ENCODE measurements at regions of chr12 and their contacts with region 1.

Region 1: GRCh38 chr12:6927379-6928024 is at the start of gene ATN1:
- DNase-seq: no peak
- H3K4me3 ChIP-seq: peak within 1 kb of the TSS; percentile 83
- CTCF ChIP-seq: no peak

Region 2: DNA sequence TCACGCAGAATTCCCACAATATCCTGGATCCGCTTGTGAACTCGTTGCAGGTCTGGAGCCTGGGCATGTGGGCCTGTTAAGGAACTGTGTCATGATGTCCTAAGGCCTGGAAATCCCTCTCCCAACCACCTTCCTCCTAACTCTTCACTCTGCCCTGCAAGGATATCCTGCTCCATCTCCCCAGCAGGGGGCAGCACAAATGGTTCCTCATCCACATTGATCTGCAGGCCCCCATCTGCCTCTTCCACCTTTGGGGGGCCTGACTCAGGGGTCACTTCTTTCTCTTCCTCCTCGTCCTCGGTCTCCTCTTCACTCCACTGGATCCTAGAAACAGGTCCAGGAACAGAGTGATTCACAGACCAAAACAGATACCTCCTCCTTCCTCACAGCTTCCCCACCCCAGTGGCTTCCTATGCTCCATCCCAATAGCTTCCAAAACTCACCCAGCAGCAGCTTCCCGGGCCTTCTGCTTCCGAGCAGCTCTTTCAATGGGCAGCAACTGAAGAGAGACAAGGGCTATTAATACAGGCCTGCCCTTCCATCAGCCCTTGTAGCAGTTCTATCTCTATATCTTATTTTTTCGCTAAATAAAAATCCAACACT is 364.0 kb before region 1 on chr12:
- CTCF ChIA-PET with region 1: no interaction called
- POLR2A ChIA-PET with region 1: no interaction called
- DNase-seq: no peak
- H3K4me3 ChIP-seq: no peak overlapping the region
- CTCF ChIP-seq: peak; percentile 84

Region 3: GRCh38 chr12:6890789-6891645 is 36.5 kb before region 1 on chr12:
- CTCF ChIA-PET with region 1: interaction called, 19 read pairs
- POLR2A ChIA-PET with region 1: interaction called, 3 read pairs
- DNase-seq: peak; percentile 47
- H3K4me3 ChIP-seq: peak overlapping the region; percentile 57
- CTCF ChIP-seq: peak; percentile 78

Region 4: DNA sequence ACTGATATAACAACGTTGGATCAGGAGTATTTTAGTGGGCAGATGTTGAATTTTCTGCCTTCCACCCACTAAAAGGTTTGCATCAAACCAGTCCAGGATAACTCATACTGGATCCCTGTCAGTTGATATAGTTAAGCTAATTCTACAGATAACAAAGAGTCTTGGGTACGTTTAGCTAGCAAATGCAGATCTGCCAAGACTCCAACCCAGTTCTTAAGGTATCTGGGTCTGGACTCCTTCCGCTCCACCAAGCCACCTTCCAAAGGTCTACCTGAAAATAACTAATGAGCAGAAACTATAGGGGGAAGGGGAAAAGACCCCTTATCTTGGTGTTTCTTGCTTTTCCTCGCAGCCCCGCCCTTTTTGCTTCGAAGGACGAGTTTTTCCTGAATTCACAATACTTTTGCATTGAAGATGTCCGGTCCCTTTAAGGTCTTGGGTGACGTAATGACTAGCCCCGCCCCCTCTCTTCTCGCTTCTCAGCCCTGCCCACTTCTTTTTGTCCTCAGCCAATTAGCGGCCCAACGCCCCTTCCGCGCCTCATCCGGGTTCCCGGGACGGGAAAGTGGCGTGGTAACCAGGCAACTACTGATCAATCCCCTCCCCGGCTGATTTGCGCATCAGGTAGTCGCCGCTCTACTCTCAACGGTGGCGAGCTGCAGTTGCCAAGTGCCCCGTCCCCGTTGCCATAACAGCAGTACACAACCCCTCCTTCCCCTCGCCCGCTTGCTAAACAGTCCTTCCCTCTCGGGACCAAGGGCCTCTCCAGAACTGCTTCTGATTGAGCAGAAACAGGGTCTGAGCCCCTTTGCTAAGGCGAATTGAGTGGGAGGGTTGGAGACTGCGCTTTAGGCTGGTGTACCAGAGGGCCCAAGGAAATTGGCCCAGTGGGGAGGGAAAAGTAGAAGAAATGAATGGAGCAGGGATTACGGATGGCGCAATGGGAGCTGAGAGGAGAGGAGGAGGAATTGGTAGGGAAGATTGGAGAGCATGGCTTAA is 22.9 kb before region 1 on chr12 and contains the start of gene LRRC23:
- CTCF ChIA-PET with region 1: interaction called, 41 read pairs
- POLR2A ChIA-PET with region 1: no interaction called
- DNase-seq: peak; percentile 55
- H3K4me3 ChIP-seq: peak within 1 kb of the TSS; percentile 92
- CTCF ChIP-seq: no peak

Region 5: DNA sequence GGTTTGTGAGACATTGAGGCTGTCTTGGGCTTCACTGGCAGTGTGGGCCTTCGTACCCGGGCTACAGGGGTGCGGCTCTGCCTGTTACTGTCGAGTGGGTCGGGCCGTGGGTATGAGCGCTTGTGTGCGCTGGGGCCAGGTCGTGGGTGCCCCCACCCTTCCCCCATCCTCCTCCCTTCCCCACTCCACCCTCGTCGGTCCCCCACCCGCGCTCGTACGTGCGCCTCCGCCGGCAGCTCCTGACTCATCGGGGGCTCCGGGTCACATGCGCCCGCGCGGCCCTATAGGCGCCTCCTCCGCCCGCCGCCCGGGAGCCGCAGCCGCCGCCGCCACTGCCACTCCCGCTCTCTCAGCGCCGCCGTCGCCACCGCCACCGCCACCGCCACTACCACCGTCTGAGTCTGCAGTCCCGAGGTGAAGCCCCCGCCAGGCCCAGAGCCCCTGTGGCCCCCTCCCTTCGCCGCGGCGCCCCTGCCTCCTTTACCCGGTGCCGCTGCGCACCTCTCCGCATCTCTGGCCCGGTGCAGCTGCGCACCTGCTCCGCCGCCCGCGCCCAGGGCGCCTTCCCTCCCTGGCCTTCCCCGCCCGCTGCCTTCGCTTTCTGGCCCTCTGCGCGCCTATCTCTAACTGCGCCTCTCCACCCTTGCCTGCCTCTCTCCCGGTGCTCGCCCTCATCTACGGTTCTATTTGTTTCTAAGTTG is 13.1 kb before region 1 on chr12 and contains the start of gene ENO2:
- CTCF ChIA-PET with region 1: interaction called, 98 read pairs
- POLR2A ChIA-PET with region 1: interaction called, 4 read pairs
- DNase-seq: no peak
- H3K4me3 ChIP-seq: peak within 1 kb of the TSS; percentile 69
- CTCF ChIP-seq: no peak

Region 6: GRCh38 chr12:6937481-6938297 is 10.2 kb after region 1 on chr12:
- CTCF ChIA-PET with region 1: interaction called, 134 read pairs
- POLR2A ChIA-PET with region 1: interaction called, 46 read pairs
- DNase-seq: no peak
- H3K4me3 ChIP-seq: peak overlapping the region; percentile 63
- CTCF ChIP-seq: peak; percentile 96

Region 7: GRCh38 chr12:6944381-6945186 is 17.1 kb after region 1 on chr12:
- CTCF ChIA-PET with region 1: interaction called, 134 read pairs
- POLR2A ChIA-PET with region 1: interaction called, 46 read pairs
- DNase-seq: no peak
- H3K4me3 ChIP-seq: peak overlapping the region; percentile 66
- CTCF ChIP-seq: peak; percentile 89

Region 8: DNA sequence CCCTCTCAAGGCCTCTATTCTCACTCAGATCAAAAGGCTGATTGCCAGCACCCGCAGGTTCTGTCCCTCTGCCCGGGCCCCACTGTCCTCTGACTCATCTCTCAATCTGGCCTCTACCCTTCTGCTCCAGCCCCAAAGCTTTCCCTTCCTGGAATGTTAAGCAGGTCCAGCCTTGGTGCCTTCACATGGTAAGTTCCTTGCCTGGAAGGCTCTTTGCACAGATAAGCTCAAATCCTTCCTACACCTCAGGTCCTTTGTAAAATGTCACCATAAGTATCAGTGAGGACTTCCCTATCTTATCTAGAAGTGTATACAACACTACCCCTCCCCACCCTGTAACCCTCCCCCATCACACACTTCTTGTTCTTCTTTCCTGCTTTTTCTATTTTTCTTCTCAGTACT is 68.5 kb after region 1 on chr12:
- CTCF ChIA-PET with region 1: no interaction called
- POLR2A ChIA-PET with region 1: no interaction called
- DNase-seq: peak; percentile 19
- H3K4me3 ChIP-seq: no peak overlapping the region
- CTCF ChIP-seq: no peak

Region 9: DNA sequence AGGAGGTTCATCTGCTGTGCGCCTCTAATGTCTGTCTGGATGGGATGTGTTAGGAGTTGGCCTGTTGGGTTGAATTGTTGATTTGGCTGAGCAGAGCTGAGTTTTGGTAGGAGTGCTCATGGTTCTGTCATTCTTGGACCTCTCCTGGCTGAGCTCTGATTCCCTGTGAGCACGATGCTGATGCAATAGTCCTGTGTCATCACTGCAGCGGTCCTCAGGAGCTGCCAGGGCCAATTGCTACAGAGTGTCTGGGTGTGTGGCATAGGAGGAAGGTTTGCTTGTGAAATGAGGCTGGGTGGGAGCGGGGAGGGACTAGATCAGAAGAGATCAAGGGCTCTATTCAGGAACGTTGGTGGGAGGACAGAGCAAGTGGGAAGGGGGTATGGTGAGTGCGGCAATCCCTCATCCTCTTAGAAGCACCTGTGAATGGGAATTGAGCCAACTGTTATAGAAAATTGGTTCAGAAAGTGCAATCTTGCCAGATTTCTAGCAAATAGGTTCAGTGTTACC is 283.2 kb after region 1 on chr12:
- CTCF ChIA-PET with region 1: no interaction called
- POLR2A ChIA-PET with region 1: no interaction called
- DNase-seq: no peak
- H3K4me3 ChIP-seq: no peak overlapping the region
- CTCF ChIP-seq: no peak

Measured in AG04449 (cell line).